HCT116 (cell line): ENCODE measurements at regions of chr17 and their contacts with region 1.

Region 1: DNA sequence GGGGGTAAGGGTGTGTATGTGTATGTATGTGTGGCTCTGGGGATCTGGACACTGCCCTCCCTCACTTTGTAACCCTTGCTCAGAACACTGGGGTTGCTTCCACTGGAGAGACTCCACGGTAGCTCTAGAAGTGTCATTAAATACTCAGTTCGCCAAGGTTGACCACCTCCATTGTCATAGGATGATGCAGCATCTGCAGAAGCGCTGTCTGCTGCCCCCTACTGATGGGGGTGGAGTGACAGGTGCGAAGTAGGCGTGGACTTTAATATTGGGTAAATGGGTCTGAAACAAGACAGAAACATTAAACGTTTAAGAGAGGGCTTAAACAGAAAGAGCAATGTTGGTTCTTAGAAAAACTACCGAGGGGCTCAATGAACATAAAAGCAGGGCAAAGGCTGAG is 35.5 kb upstream of the STAC2 start:
- DNase-seq: no peak
- ATAC-seq: peak; percentile 80
- H3K4me3 ChIP-seq: no peak overlapping the region
- H3K27ac ChIP-seq: no peak overlapping the region
- H3K4me1 ChIP-seq: no peaks in the 10 kb centered on the region
- H3K27me3 ChIP-seq: no peaks in the 10 kb centered on the region
- CTCF ChIP-seq: peak in 2 of 3 experiments; percentile 64 to 65; a peak in 4 of 6 replicates
- POLR2A ChIP-seq: no peak
- RAD21 ChIP-seq: no peak

Region 2: DNA sequence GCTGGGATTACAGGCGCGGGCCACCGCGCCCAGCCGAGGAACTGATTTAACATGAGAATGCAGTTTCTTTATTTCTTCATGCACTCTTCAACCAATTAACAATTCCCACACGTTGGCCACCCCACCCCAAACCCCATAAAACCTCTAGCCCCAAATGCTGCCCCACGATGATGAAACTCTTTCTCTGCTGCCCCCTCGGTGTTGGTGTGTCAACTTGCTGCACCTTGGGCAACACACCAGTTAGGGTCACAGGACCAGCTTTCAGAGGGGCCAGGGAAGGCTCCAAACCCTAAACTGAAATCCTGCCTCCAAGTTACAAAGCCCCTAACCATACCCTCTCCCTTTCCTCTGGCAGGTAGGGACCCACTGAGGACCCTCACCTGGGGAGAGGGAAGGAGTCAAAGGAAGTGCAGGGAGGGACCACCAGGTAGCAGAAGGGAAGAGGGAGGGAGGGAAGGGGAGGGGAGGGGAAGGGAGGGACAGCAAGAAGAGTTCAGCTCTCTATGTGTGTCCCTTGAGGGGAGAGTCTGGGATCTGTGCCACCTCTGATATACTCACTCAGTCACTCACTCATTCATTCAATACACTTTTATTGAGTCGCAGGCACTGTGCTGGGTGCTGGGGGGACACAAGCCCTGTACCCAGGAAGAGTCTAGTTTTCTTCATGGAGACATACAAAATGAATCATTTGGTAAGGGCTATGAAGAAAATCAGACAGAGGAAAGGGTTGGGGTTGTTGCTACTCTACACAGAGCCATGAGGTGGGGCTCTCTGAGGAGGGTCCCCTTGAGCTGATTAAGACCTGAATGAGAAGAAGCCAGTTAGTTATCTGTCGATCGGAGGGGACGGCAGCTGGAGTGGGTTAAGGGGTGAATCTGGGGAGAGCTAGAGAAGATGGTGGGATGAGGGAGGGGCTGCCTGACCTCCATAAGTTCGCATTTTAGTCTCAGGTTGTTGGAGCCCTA is 113.8 kb before region 1 on chr17:
- CTCF ChIA-PET with region 1: no interaction called
- POLR2A ChIA-PET with region 1: no interaction called
- RAD21 ChIA-PET with region 1: no interaction called
- intact Hi-C with region 1: no loop called
- DNase-seq: no peak
- ATAC-seq: no peak
- H3K4me3 ChIP-seq: no peak overlapping the region
- H3K27ac ChIP-seq: no peak overlapping the region
- H3K4me1 ChIP-seq: peaks cover 5 to 6% of the 10 kb centered on the region in 2 experiments
- H3K27me3 ChIP-seq: no peaks in the 10 kb centered on the region
- CTCF ChIP-seq: no peak
- POLR2A ChIP-seq: no peak
- RAD21 ChIP-seq: no peak

Region 3: GRCh38 chr17:39244600-39245570 is 16.4 kb before region 1 on chr17:
- CTCF ChIA-PET with region 1: interaction called, 12 read pairs
- POLR2A ChIA-PET with region 1: no interaction called
- RAD21 ChIA-PET with region 1: no interaction called
- intact Hi-C with region 1: no loop called
- DNase-seq: peak; percentile 80
- ATAC-seq: peak; percentile 95
- H3K4me3 ChIP-seq: no peak overlapping the region
- H3K27ac ChIP-seq: no peak overlapping the region
- H3K4me1 ChIP-seq: peaks cover under 1 to 13% of the 10 kb centered on the region in 2 experiments; a peak in 3 of 4 replicates
- H3K27me3 ChIP-seq: no peaks in the 10 kb centered on the region
- CTCF ChIP-seq: peak; percentile 91 to 96 (median 95)
- POLR2A ChIP-seq: no peak
- RAD21 ChIP-seq: peak; percentile 95